Activated B cell treated with CpG ODN at 0.5 μM for 24 hours (primary cell): ENCODE measurements at regions of chr11 and their contacts with region 1.

Region 1: GRCh38 chr11:75142714-75143419 is 8.0 kb upstream of the SLCO2B1 start:
- DNase-seq: no peak
- ATAC-seq: peak; percentile 67
- H3K4me3 Mint-ChIP-seq: peak overlapping the region; percentile 8
- H3K27ac Mint-ChIP-seq: no peak overlapping the region
- H3K4me1 Mint-ChIP-seq: peaks cover 21% of the 10 kb centered on the region
- H3K27me3 Mint-ChIP-seq: peaks cover 15% of the 10 kb centered on the region
- CTCF ChIP-seq: no peak

Region 2: GRCh38 chr11:75022759-75023396 is 120.0 kb before region 1 on chr11:
- CTCF ChIA-PET with region 1: interaction called, 4 read pairs
- POLR2A ChIA-PET with region 1: no interaction called
- intact Hi-C with region 1: loop called (anchors 5 kb)
- DNase-seq: peak; percentile 61
- ATAC-seq: peak; percentile 87
- H3K4me3 Mint-ChIP-seq: no peak overlapping the region
- H3K27ac Mint-ChIP-seq: no peak overlapping the region
- H3K4me1 Mint-ChIP-seq: no peaks in the 10 kb centered on the region
- H3K27me3 Mint-ChIP-seq: no peaks in the 10 kb centered on the region
- CTCF ChIP-seq: peak; percentile 73

Region 3: DNA sequence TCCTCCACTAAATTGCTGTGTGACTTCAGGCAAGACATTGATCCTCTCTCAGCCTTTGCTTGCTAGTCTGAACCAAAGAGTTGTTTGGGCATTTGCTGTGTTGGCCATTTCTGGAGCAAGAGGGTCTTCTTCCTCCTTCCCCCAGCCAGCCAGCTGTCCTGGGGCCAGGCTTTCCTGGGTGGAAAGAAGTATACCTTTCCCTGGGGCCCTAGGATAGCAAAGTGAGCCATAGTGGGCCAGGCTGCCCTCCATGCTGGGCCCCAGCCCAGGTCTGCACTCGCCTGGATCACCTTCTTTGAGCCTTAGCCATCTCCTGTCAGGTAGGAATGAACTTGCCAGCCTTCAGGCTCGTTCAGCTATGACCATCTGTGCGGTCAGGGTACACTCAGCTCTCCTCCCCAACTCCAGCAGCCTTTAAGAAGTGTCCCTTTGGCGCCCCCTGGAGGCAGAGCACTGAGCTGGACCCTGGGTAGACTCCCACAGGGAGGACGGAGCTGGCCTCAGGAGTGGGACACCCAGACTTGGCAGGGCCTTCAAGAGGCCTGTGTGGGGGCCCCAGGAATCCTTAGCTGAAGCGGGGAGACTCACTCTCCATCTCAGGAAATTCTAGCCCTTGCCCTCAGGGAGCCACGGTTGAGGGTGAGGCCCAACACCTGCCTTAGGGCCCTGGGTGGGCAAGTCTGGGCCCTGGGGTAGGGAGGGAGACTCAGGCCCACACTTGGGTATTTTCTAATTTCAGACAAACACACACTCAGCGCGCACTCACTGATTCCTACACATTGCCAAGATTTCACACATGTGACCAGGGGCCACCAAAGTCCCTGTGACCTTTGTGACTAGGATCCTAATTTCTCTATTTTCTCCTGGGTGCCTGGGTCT is 62.1 kb after region 1 on chr11:
- CTCF ChIA-PET with region 1: interaction called, 33 read pairs
- POLR2A ChIA-PET with region 1: no interaction called
- intact Hi-C with region 1: loop called (anchors 1 kb)
- DNase-seq: peak; percentile 49
- ATAC-seq: peak; percentile 56
- H3K4me3 Mint-ChIP-seq: no peak overlapping the region
- H3K27ac Mint-ChIP-seq: no peak overlapping the region
- H3K4me1 Mint-ChIP-seq: no peaks in the 10 kb centered on the region
- H3K27me3 Mint-ChIP-seq: no peaks in the 10 kb centered on the region
- CTCF ChIP-seq: no peak

Region 4: GRCh38 chr11:75241036-75241905 is 98.4 kb after region 1 on chr11:
- CTCF ChIA-PET with region 1: interaction called, 125 read pairs
- POLR2A ChIA-PET with region 1: no interaction called
- intact Hi-C with region 1: loop called (anchors 1 kb)
- DNase-seq: peak; percentile 86
- ATAC-seq: peak; percentile 97
- H3K4me3 Mint-ChIP-seq: peak overlapping the region; percentile 69
- H3K27ac Mint-ChIP-seq: no peak overlapping the region
- H3K4me1 Mint-ChIP-seq: peaks cover 10% of the 10 kb centered on the region
- H3K27me3 Mint-ChIP-seq: peaks cover 48% of the 10 kb centered on the region
- CTCF ChIP-seq: no peak

Region 5: DNA sequence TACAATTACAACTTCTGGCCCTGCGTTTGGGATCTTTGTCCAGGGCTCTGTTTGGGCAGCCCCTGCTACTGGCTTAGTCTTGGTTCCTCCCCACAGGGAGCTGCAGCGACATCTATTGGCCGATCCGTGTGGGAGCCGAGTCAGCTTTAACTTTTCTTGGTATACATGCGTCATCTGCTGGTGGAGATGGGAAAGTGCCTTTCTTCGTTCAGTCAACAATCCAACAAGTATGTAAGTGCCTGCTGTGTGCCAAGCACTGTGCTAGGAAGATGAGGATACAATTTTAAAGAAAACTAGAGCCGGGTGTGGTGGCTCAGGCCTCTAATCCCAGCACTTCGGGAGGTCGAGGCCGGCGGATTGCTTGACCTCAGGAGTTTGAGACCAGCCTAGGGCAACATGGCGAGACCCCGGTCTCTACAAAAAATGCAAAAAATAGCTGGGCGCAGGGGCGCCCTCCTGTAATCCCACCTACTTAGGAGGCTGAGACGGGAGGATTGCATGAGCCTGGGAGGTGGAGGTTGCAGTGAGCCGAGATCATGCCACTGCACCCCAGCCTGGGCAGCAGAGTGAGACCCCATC is 105.9 kb after region 1 on chr11:
- CTCF ChIA-PET with region 1: interaction called, 125 read pairs
- POLR2A ChIA-PET with region 1: interaction called, 3 read pairs
- intact Hi-C with region 1: loop called (anchors 1 kb)
- DNase-seq: peak; percentile 65
- ATAC-seq: peak; percentile 97
- H3K4me3 Mint-ChIP-seq: no peak overlapping the region
- H3K27ac Mint-ChIP-seq: no peak overlapping the region
- H3K4me1 Mint-ChIP-seq: no peaks in the 10 kb centered on the region
- H3K27me3 Mint-ChIP-seq: peaks cover 24% of the 10 kb centered on the region
- CTCF ChIP-seq: peak; percentile 100

Region 6: DNA sequence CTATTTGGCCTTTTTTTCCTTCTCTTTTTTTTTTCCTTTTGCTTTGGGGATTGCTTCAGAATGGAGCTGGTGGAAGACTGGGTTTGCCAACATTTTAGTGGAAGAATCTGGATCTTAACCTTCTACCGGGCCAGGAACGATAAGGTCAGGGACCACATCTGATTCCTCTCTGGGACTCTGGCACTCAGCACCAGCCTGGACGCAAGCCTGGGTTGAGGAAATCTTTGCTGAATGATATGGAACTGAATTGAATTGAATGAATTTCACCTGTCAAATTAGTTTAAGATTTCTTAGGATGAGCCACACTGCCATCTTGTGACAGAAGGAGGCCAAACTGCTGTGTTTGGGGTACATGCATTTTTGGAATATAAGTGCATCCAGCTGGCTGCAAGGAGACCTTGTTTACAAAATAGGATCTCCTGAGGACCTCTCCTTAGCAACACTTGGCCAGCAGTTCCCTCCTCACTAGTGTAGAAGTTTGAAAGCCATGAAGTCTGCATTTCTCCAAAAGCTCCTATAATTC is 128.1 kb after region 1 on chr11:
- CTCF ChIA-PET with region 1: interaction called, 36 read pairs
- POLR2A ChIA-PET with region 1: no interaction called
- intact Hi-C with region 1: loop called (anchors 1 kb)
- DNase-seq: no peak
- ATAC-seq: no peak
- H3K4me3 Mint-ChIP-seq: no peak overlapping the region
- H3K27ac Mint-ChIP-seq: no peak overlapping the region
- H3K4me1 Mint-ChIP-seq: peaks cover 15% of the 10 kb centered on the region
- H3K27me3 Mint-ChIP-seq: no peaks in the 10 kb centered on the region
- CTCF ChIP-seq: no peak

Region 7: DNA sequence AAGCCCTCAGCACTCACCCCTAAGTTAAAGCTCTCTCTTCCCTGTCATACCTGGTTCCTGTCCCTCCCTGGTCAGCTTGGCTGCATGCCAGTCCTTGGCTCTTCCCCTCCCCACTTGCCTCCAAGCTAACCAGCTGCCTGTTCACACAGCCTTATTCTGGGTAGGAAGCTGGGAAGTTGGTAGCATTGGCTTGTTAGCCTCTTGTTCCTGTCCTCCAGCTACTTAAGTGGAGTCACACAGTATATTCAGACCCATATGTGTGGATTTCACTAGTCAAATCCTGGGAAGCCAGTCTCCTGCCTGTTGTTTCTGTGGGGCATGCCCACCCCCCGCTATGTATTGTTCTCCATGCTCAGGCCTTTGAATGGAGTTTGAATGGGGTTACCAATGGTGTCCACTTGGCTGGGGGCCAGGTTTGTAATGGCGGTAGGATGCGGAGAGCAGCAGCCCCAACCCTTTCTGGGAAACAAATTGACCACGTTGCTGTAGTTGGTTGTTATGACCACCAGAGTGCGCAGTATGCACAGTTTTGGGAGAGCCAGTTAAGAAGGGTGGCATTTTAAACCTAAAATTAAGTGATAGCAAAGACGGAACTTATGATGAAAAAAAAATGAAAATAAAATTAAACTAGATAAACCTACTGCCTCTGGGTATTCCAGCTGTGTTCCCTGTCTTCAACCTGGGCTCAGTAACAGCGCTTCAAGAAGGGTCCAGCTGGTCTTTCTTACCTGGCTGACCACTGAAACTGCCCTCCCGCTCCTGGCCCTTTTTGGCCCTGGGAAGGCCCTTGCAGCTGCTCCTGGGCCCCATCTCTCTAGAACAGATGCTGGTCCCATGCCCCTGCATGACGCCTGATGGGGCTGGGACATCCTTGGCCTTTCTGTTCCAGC is 245.8 kb after region 1 on chr11:
- CTCF ChIA-PET with region 1: interaction called, 4 read pairs
- POLR2A ChIA-PET with region 1: no interaction called
- intact Hi-C with region 1: loop called (anchors 2 kb)
- DNase-seq: peak; percentile 33
- ATAC-seq: peak; percentile 92
- H3K4me3 Mint-ChIP-seq: no peak overlapping the region
- H3K27ac Mint-ChIP-seq: no peak overlapping the region
- H3K4me1 Mint-ChIP-seq: peaks cover 4% of the 10 kb centered on the region
- H3K27me3 Mint-ChIP-seq: peaks cover 16% of the 10 kb centered on the region
- CTCF ChIP-seq: no peak